OCI-LY7 (cell line): ENCODE measurements at regions of chr9 and their contacts with region 1.

Region 1: DNA sequence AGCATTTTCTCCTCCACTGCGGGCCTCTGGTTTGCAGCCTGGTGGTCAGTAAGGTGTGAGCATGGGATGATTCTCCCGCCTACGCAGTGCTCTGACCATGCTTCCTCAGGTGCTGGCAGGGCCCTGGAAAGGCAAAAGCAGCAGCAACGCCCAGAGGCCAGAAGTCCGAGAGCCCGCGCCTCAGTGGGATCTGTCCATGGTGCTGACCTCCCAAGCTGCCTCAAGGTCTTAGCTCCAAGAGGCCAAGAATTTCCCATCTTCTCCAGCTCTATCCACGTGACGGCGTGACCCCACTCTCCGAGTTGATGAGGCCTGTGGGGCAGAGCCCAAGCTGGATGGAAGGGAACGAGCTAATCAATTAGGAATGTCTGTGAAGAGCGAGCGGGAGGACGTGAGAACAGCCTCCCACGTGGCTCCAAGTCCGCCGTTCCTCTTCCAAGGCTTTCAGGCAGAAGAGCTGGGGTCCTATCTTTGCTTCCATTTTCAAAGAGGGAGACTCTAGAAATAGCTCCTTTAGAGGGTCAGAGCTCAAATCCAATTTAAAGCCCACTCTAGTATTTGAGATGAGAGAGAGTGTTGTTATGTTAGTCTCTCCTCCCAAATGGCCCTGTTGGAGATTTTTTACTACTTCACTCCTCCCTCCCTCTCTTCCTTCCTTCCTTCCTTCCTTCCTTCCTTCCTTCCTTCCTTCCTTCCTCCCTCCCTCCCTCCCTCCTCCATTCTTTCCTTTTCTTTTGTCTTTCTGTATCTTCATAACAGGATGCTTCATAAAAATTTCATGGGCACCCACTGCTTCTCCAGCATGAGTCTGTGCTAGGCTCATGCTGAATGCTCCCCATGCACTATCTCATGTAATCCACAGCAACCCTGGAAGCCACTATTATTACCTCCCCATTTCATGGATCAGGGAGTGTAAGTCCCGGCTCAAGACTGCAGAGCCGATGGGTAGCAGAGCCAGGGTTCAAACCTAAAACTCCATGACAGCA is 69.3 kb downstream of the OLFM1 start:
- DNase-seq: peak; percentile 11
- H3K4me3 ChIP-seq: no peak overlapping the region
- H3K27ac ChIP-seq: no peak overlapping the region
- H3K4me1 ChIP-seq: no peaks in the 10 kb centered on the region
- CTCF ChIP-seq: no peak

Region 2: GRCh38 chr9:134751622-134752021 is 405.2 kb before region 1 on chr9:
- CTCF ChIA-PET with region 1: no interaction called
- POLR2A ChIA-PET with region 1: no interaction called
- intact Hi-C with region 1: no loop called
- DNase-seq: no peak
- H3K4me3 ChIP-seq: no peak overlapping the region
- H3K27ac ChIP-seq: no peak overlapping the region
- H3K4me1 ChIP-seq: no peaks in the 10 kb centered on the region
- CTCF ChIP-seq: no peak

Region 3: DNA sequence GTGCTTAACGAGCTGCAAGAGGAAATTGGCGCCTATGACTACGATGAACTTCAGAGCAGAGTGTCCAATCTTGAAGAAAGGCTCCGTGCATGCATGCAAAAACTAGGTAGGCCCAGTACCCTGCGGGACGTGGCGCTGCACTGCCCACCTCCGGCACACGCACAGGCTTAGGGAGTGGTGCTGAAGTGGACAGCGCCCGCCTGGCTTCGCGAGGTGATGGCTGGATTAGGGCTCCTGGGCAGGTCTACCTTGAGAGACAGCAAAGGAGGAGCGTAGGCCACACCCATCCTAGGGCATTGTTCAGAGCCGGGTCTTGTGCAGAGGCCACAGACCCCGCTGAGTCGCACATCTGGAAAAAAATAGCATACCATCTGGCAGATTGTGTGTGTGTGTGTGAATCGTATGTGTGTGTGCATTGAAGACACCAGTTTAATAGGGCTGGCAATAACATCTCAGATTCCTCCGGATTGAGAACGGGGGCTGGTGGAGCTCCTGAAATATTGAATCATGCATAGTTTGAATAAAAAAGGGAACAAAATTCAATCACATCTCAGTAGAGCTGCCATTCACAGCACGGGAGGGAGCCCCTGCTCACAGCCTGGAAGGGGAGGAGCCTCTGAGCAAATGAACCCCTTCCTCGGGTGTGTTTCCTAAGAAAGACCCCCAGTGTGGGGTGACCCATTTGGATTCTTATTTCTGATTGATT is 58.3 kb before region 1 on chr9:
- CTCF ChIA-PET with region 1: no interaction called
- POLR2A ChIA-PET with region 1: no interaction called
- intact Hi-C with region 1: no loop called
- DNase-seq: peak; percentile 12
- H3K4me3 ChIP-seq: no peak overlapping the region
- H3K27ac ChIP-seq: no peak overlapping the region
- H3K4me1 ChIP-seq: no peaks in the 10 kb centered on the region
- CTCF ChIP-seq: no peak

Region 4: DNA sequence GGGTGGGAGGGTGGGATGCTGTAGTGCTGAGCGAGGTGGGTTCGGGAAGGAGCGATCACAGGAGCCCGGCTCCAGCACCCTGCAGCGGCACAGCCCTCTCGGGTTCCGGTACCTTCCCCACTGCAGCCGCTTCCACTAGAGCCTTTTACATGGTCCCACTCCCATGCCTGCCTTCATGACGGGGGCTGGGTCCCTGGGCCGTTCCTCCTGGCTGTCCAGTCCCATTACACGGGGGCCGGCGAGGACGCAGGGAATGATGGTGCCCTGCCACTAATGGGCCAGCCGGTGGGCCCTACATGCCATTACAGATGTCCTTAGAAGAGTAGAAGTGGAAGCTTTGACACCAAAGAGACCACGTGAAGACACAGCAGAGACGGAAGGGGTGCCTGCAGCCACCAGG is 218.2 kb after region 1 on chr9:
- CTCF ChIA-PET with region 1: interaction called, 12 read pairs
- POLR2A ChIA-PET with region 1: no interaction called
- intact Hi-C with region 1: no loop called
- DNase-seq: no peak
- H3K4me3 ChIP-seq: no peak overlapping the region
- H3K27ac ChIP-seq: no peak overlapping the region
- H3K4me1 ChIP-seq: no peaks in the 10 kb centered on the region
- CTCF ChIP-seq: no peak